PC-9 (cell line): ENCODE measurements at regions of chr2 and their contacts with region 1.

Region 1: GRCh38 chr2:239882331-239882732 is 142.8 kb downstream of the NDUFA10 start:
- DNase-seq: peak; percentile 46 to 60
- H3K4me3 ChIP-seq: no peak overlapping the region
- H3K27ac ChIP-seq: no peak overlapping the region
- H3K4me1 ChIP-seq: no peaks in the 10 kb centered on the region
- H3K27me3 ChIP-seq: peaks cover 48% of the 10 kb centered on the region
- CTCF ChIP-seq: peak; percentile 82

Region 2: GRCh38 chr2:239035361-239036078 is 846.8 kb before region 1 on chr2:
- CTCF ChIA-PET with region 1: no interaction called
- POLR2A ChIA-PET with region 1: no interaction called
- intact Hi-C with region 1: loop called (anchors 2 kb)
- DNase-seq: peak in 1 of 2 experiments; percentile 71
- H3K4me3 ChIP-seq: no peak overlapping the region
- H3K27ac ChIP-seq: no peak overlapping the region
- H3K4me1 ChIP-seq: no peaks in the 10 kb centered on the region
- H3K27me3 ChIP-seq: peaks cover 68% of the 10 kb centered on the region
- CTCF ChIP-seq: peak; percentile 96

Region 3: GRCh38 chr2:239824046-239824694 is 58.2 kb before region 1 on chr2:
- CTCF ChIA-PET with region 1: no interaction called
- POLR2A ChIA-PET with region 1: no interaction called
- intact Hi-C with region 1: loop called (anchors 1 kb)
- DNase-seq: peak; percentile 69 to 74
- H3K4me3 ChIP-seq: no peak overlapping the region
- H3K27ac ChIP-seq: no peak overlapping the region
- H3K4me1 ChIP-seq: no peaks in the 10 kb centered on the region
- H3K27me3 ChIP-seq: peaks cover 94% of the 10 kb centered on the region
- CTCF ChIP-seq: peak; percentile 62